ENCODE measurements at regions of chr13 and their contacts with region 1.

Region 1: GRCh38 chr13:110006304-110006703 is 219.9 kb upstream of the IRS2 start:
- DNase-seq: peak; percentile 51 to 71
- ATAC-seq: peak; percentile 71 to 89
- H3K4me3 ChIP-seq: no peak overlapping the region
- H3K27ac ChIP-seq: peak overlapping the region; percentile 24 to 73 (median 42)
- H3K4me1 ChIP-seq: peaks cover 0 to 4% of the 10 kb centered on the region in 2 donors
- H3K27me3 ChIP-seq: no peaks in the 10 kb centered on the region
- CTCF ChIP-seq: no peak
- POLR2A ChIP-seq: no peak

Region 2: GRCh38 chr13:109869312-109870237 is 136.7 kb before region 1 on chr13:
- in situ Hi-C with region 1: no loop called
- intact Hi-C with region 1: loop called (anchors 10 kb)
- DNase-seq: peak in 1 of 2 donors; percentile 80
- ATAC-seq: peak; percentile 30 to 88
- H3K4me3 ChIP-seq: peak overlapping the region; percentile 30 to 59 (median 40)
- H3K27ac ChIP-seq: peak overlapping the region in 1 of 4 donors; percentile 42
- H3K4me1 ChIP-seq: peaks cover 9 to 15% of the 10 kb centered on the region in 2 donors
- H3K27me3 ChIP-seq: no peaks in the 10 kb centered on the region
- CTCF ChIP-seq: peak in 1 of 5 experiments; percentile 16
- POLR2A ChIP-seq: no peak

Region 3: DNA sequence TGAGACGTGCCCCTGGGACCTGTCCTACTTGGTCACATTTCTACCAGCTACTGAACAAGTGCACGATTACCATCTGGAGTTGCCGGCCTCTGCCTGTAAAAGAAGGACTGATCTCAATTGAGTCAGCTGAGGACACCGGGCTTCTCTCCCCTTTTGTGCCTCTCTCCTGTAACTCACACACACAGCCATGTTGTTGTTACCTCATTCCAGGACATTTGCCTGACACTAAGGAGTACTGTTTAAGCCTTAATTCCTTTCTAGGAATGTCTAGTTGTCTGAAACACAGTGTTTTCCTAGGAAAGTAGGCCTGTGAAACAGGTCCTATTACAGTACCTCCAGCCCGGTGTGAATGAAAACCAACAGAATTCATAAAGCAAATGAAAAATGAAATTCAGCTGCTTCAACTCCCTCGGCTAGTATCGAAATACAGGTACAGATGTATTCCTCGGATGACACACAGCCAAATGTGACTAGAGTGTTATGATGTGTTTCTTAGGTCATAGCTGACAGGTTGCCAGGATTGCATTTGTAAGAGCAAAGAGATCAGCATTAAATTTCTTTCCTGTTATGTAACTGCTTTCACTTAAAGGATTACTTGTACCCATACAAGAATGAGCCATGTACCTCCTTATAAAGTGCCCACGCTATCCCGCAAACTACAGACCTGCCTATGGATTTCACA is 67.9 kb before region 1 on chr13:
- in situ Hi-C with region 1: no loop called
- intact Hi-C with region 1: loop called (anchors 5 kb)
- DNase-seq: peak; percentile 40 to 71
- ATAC-seq: peak; percentile 95 to 98
- H3K4me3 ChIP-seq: no peak overlapping the region
- H3K27ac ChIP-seq: peak overlapping the region; percentile 65 to 81 (median 70)
- H3K4me1 ChIP-seq: peaks cover 11% of the 10 kb centered on the region in 2 donors
- H3K27me3 ChIP-seq: no peaks in the 10 kb centered on the region
- CTCF ChIP-seq: no peak
- POLR2A ChIP-seq: peak; percentile 12 to 53

Region 4: DNA sequence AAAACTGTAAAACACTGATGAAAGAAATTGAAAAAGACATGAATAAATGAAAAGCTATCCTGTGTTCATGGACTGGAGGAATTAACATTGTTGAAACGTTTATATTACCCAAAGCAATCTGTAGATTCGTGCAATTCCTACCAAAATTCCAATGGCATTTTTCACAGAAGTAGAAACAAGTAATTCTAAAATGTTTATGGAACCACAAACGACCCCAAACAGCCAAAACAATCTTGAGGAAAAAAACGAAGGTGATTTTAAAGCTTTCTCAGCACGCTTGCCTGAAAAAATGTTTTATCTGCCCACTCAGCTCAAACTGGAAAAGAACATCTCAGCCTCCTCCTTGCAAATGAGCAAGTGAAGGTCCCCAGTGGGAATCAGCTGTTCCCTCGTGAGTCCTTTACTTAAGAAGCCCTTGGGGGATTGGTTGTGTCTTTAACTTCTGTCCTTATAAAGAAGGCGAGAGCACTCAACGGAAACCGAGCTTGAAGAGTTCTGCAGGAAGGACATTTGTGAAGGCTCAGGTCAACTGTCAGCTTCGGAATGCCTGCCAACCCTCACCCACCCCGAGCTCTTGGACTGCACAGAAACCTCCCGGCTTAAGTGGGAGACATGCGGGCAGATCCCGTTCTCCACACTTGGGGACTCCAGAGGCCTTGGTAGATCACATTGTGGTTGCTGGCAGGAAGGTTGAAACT is 36.1 kb after region 1 on chr13:
- in situ Hi-C with region 1: no loop called
- intact Hi-C with region 1: no loop called
- DNase-seq: no peak
- ATAC-seq: no peak
- H3K4me3 ChIP-seq: no peak overlapping the region
- H3K27ac ChIP-seq: no peak overlapping the region
- H3K4me1 ChIP-seq: no peaks in the 10 kb centered on the region
- H3K27me3 ChIP-seq: peaks cover 0 to 2% (median 0%) of the 10 kb centered on the region in 3 donors
- CTCF ChIP-seq: no peak
- POLR2A ChIP-seq: no peak